Vagina (tissue), 2 donors: ENCODE measurements at regions of chr1 and their contacts with region 1.

Region 1: DNA sequence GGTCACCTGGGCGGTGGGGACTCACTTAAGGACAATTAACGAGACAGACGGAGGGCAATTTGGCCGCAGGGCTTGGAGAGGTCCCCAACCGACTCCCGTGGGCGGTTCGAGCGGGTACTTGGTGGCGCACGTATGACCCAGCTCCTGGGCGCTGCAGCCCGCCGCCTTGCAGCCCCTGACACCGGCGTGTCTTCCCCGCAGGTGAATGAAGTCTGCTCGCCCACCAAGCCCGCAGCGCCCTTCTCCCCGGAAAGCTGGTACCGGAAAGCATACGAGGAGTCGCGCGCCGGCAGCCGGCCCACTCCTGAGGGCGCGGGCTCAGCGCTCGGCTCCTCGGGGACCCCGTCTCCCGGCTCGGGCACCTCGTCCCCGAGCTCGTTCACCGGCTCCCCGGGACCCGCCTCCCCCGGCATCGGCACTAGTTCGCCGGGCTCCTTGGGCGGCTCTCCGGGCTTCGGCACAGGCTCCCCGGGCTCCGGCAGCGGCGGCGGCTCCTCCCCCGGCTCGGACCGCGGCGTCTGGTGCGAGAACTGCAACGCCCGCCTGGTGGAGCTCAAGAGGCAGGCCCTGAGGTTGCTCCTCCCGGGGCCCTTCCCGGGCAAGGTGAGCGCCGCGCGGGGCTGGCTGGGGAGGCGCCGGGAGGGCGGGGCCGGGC is 1.4 kb downstream of the KIF26B start:
- DNase-seq: no peak
- H3K4me3 ChIP-seq: peak overlapping the region; percentile 51 to 58
- H3K27ac ChIP-seq: no peak overlapping the region
- H3K4me1 ChIP-seq: peaks cover 44% of the 10 kb centered on the region
- H3K27me3 ChIP-seq: no peaks in the 10 kb centered on the region
- CTCF ChIP-seq: peak; percentile 30 to 43 (median 30)
- POLR2A ChIP-seq: no peak

Region 2: DNA sequence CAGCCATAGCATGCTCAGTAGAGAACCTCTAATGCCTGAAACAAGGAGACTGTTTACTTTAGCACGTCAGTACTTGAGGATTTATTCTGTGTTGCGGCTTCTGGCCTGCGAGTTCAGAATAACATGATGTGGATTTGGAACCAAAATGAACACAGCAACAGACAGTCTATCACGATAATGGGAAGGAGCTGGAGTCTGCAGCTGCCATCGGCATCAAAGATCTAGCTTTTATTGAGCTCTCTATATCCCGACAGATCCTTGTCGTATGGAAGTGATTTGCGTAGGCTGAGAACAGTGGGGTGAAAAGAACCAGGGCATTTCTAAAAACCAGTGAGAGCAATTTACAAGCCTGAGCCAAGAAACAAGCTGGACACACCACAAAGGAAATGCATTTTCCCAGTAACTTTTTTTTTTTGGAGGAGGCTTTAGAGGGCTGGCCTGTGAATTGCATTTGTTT is 292.8 kb after region 1 on chr1:
- intact Hi-C with region 1: no loop called
- DNase-seq: no peak
- H3K4me3 ChIP-seq: no peak overlapping the region
- H3K27ac ChIP-seq: no peak overlapping the region
- H3K4me1 ChIP-seq: no peaks in the 10 kb centered on the region
- H3K27me3 ChIP-seq: no peaks in the 10 kb centered on the region
- CTCF ChIP-seq: no peak
- POLR2A ChIP-seq: no peak

Region 3: GRCh38 chr1:246002725-246003441 is 846.7 kb after region 1 on chr1:
- intact Hi-C with region 1: loop called (anchors 10 kb)
- DNase-seq: no peak
- H3K4me3 ChIP-seq: no peak overlapping the region
- H3K27ac ChIP-seq: no peak overlapping the region
- H3K4me1 ChIP-seq: peaks cover 9% of the 10 kb centered on the region
- H3K27me3 ChIP-seq: no peaks in the 10 kb centered on the region
- CTCF ChIP-seq: peak; percentile 53 to 79 (median 59)
- POLR2A ChIP-seq: no peak